ENCODE measurements at regions of chr1 and their contacts with region 1.

Region 1: DNA sequence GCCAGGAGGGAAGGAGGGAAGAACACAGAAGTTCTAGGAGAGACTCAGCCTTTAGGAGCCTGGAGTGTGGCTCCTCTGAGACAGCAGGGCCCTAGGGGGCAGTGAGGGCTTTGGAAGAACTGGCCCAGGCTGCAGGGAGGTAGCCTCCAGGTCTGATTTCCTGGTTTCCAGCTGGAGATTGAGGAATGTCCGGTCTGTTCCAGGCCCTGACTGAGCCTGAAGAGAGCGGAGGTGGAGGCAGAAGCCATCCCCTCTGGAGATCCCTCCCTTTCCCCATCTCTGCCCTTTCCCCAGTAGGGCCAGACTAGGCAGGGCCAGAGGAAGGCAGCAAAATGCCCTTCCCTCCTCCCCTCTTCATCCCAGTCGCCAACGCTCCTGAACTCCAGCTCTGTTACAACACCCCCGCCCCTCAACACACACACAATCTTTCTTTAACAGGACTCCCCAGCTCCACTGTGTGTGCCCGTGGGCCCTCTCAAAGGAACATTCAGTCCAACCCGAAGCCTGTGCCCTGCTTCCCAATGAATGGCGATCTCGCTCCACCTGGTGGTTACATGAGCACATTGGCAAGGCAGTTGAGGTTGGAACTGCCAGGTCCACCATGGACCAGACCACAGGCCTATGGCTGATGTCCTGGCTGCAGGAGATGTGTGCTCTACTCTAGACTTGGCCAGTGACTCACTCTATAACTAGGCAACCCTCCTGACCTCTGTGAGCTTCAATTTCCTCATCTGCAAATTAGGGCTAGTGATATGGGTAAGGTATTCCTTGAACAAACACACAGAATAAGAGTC is 32.0 kb downstream of the MAP7D1 start:
- DNase-seq: peak; percentile 92
- H3K4me3 ChIP-seq: no peak overlapping the region
- H3K27ac ChIP-seq: peak overlapping the region; percentile 46
- H3K4me1 ChIP-seq: peaks cover 6% of the 10 kb centered on the region
- H3K27me3 ChIP-seq: no peaks in the 10 kb centered on the region
- CTCF ChIP-seq: peak; percentile 83 to 89
- POLR2A ChIP-seq: peak; percentile 65

Region 2: GRCh38 chr1:34709547-34709946 is 1478.5 kb before region 1 on chr1:
- CTCF ChIA-PET with region 1: no interaction called
- POLR2A ChIA-PET with region 1: no interaction called
- dilution Hi-C with region 1: no loop called
- intact Hi-C with region 1: no loop called
- DNase-seq: no peak
- H3K4me3 ChIP-seq: no peak overlapping the region
- H3K27ac ChIP-seq: no peak overlapping the region
- H3K4me1 ChIP-seq: no peaks in the 10 kb centered on the region
- H3K27me3 ChIP-seq: no peaks in the 10 kb centered on the region
- CTCF ChIP-seq: no peak
- POLR2A ChIP-seq: no peak

Region 3: GRCh38 chr1:36099681-36100341 is 88.2 kb before region 1 on chr1:
- CTCF ChIA-PET with region 1: interaction called, 42 read pairs
- POLR2A ChIA-PET with region 1: no interaction called
- dilution Hi-C with region 1: no loop called
- intact Hi-C with region 1: loop called (anchors 1 kb)
- DNase-seq: peak; percentile 65
- H3K4me3 ChIP-seq: no peak overlapping the region
- H3K27ac ChIP-seq: no peak overlapping the region
- H3K4me1 ChIP-seq: no peaks in the 10 kb centered on the region
- H3K27me3 ChIP-seq: no peaks in the 10 kb centered on the region
- CTCF ChIP-seq: peak; percentile 84
- POLR2A ChIP-seq: no peak

Region 4: DNA sequence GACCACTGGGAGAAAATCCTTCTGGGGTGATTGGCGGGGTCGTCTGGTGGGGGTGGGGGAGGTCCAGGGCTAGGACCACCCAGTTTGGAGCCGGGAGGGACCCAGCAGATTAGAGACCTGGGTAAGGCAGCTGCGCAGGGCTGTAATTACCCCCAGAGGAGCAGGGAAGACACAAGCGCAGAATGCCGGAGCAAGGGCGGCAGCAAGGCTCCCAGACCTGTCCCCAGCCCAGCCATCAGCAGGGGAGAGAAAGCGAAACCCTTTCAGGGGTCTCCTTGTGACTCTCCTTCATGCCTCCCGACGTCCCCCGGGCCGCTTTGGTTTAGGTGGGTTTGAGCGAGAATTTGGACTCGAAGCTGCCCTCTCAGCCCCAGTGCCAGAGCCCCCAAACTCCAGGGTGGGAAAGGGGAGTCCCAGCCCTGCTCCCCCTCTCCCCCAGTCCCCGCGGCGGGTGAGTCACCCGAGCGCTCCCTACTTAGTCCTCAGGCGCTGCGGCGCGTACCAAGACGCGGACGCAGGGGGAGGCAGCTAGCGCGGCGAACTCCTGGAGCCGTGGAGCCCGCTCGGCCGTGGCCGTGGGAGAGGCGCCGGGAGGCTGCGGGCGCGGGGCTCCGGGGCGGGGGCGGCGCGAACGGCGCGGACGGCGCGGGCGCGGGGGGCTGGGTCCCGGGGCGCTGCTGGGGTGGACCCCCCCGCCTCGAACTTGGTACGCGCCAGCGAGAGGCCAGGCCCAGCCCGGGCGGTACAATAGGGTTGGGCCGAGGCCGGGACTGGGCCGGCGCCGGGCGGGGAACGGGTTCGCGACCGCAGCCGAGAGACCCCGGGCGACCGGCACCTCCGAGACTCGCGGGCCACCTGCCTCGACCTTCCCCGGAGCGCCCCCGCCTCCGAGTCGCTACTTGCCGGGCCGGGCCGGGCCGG is 32.3 kb before region 1 on chr1 and contains the start of gene MAP7D1:
- CTCF ChIA-PET with region 1: interaction called, 201 read pairs
- POLR2A ChIA-PET with region 1: interaction called, 12 read pairs
- dilution Hi-C with region 1: no loop called
- intact Hi-C with region 1: loop called (anchors 1 kb)
- DNase-seq: peak; percentile 76
- H3K4me3 ChIP-seq: peak within 1 kb of the TSS; percentile 48 to 88 (median 80)
- H3K27ac ChIP-seq: peak within 1 kb of the TSS; percentile 93
- H3K4me1 ChIP-seq: peaks cover 50% of the 10 kb centered on the region
- H3K27me3 ChIP-seq: no peaks in the 10 kb centered on the region
- CTCF ChIP-seq: no peak
- POLR2A ChIP-seq: peak; percentile 88
- total RNA-seq, gene MAP7D1: 193 and 199 TPM in 2 replicates

Region 5: GRCh38 chr1:36172983-36173382 is 15.0 kb before region 1 on chr1:
- CTCF ChIA-PET with region 1: interaction called, 16 read pairs
- POLR2A ChIA-PET with region 1: no interaction called
- dilution Hi-C with region 1: no loop called
- intact Hi-C with region 1: no loop called
- DNase-seq: peak; percentile 49
- H3K4me3 ChIP-seq: no peak overlapping the region
- H3K27ac ChIP-seq: peak overlapping the region; percentile 56
- H3K4me1 ChIP-seq: peaks cover 19% of the 10 kb centered on the region
- H3K27me3 ChIP-seq: no peaks in the 10 kb centered on the region
- CTCF ChIP-seq: no peak
- POLR2A ChIP-seq: no peak

Region 6: DNA sequence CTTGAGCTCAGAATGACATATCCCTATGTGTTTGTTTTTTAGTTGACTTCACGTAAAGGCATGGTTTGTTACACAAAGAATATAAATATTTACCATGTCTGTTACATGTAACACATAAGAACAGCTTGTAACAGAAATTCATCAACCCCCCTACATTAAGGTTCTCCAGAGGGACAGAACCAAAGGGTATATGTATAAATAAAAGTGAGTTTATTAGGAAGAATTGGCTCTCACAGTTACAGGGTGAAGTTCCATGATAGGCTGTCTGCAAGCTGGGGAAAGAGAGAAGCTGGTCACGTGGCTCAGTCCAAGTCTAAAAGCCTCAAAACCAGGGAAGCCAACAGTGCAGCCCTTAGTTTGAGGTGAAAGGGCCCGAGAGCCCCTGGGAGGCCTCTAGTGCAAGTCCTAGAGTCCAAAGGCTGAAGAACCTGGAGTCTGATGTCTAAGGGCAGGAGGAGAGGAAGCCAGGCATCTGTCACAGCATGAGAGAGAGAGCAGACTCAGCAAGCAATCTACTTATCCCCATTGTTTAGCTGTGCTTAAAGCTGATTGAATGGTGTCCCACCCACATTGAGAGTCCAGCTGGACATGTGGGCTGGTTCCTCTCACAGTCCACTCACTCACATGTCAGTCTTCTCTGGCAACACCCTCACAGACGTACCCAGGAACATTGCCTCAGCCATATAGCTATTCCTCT is 52.1 kb after region 1 on chr1:
- CTCF ChIA-PET with region 1: no interaction called
- POLR2A ChIA-PET with region 1: interaction called, 14 read pairs
- dilution Hi-C with region 1: no loop called
- intact Hi-C with region 1: no loop called
- DNase-seq: no peak
- H3K4me3 ChIP-seq: no peak overlapping the region
- H3K27ac ChIP-seq: no peak overlapping the region
- H3K4me1 ChIP-seq: no peaks in the 10 kb centered on the region
- H3K27me3 ChIP-seq: no peaks in the 10 kb centered on the region
- CTCF ChIP-seq: no peak
- POLR2A ChIP-seq: no peak